Breast epithelium (tissue), 4 donors: ENCODE measurements at regions of chr13 and their contacts with region 1.

Region 1: DNA sequence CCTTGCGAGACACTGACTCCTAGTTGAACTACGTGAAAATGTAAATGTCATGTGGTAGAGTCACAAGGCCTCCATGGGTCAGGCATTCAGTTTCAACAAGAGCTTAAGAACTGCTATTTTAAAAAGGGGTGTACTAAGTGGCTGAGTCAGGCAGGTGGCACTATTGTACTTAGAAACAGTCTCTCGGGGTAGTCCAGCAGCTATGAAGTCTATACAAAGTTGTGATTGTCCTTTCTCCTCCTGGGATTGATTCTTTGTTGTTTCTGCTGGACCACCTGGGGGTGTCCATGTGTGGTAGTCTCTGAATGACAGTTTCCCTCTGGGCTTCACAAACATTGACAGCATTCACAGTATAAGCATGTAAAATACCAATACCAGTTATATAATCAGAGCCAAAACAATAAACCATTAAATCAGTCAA is 33.0 kb downstream of the UGGT2 start:
- DNase-seq: no peak
- H3K4me3 ChIP-seq: no peak overlapping the region
- H3K27ac ChIP-seq: no peak overlapping the region
- H3K4me1 ChIP-seq: no peaks in the 10 kb centered on the region
- H3K27me3 ChIP-seq: no peaks in the 10 kb centered on the region
- CTCF ChIP-seq: peak; percentile 20 to 55 (median 47)
- POLR2A ChIP-seq: no peak

Region 2: GRCh38 chr13:96003304-96003703 is 16.9 kb before region 1 on chr13:
- intact Hi-C with region 1: loop called (anchors 1 kb)
- DNase-seq: no peak
- H3K4me3 ChIP-seq: no peak overlapping the region
- H3K27ac ChIP-seq: no peak overlapping the region
- H3K4me1 ChIP-seq: no peaks in the 10 kb centered on the region
- H3K27me3 ChIP-seq: no peaks in the 10 kb centered on the region
- CTCF ChIP-seq: no peak
- POLR2A ChIP-seq: no peak